H1 (cell line): ENCODE measurements at regions of chr19 and their contacts with region 1.

Region 1: GRCh38 chr19:45506246-45506990 is 861 bp upstream of the VASP start:
- DNase-seq: peak in 1 of 2 experiments; percentile 99
- H3K4me3 ChIP-seq: peak overlapping the region; percentile 72 to 97 (median 95)
- H3K27ac ChIP-seq: peak overlapping the region; percentile 44; the same call in 1 of the 2 replicates
- H3K4me1 ChIP-seq: peaks cover 7 to 14% (median 11%) of the 10 kb centered on the region in 4 experiments
- H3K27me3 ChIP-seq: no peaks in the 10 kb centered on the region
- CTCF ChIP-seq: peak; percentile 51 to 54 (median 53)
- EP300 ChIP-seq: no peak
- POLR2A ChIP-seq: peak; percentile 60 to 80
- RAD21 ChIP-seq: peak; percentile 35 to 51; a peak in 3 of 4 replicates

Region 2: GRCh38 chr19:45391340-45391739 is 115.1 kb before region 1 on chr19:
- CTCF ChIA-PET with region 1: no interaction called
- POLR2A ChIA-PET with region 1: no interaction called
- DNase-seq: no peak
- H3K4me3 ChIP-seq: no peak overlapping the region
- H3K27ac ChIP-seq: peak overlapping the region; percentile 23; the same call in 1 of the 2 replicates
- H3K4me1 ChIP-seq: peaks cover 0 to 5% (median 2%) of the 10 kb centered on the region in 4 experiments; a peak in 4 of 7 replicates
- H3K27me3 ChIP-seq: peaks cover 2 to 11% (median 5%) of the 10 kb centered on the region in 4 experiments; a peak in 6 of 7 replicates
- CTCF ChIP-seq: no peak
- EP300 ChIP-seq: no peak
- POLR2A ChIP-seq: no peak
- RAD21 ChIP-seq: no peak

Region 3: DNA sequence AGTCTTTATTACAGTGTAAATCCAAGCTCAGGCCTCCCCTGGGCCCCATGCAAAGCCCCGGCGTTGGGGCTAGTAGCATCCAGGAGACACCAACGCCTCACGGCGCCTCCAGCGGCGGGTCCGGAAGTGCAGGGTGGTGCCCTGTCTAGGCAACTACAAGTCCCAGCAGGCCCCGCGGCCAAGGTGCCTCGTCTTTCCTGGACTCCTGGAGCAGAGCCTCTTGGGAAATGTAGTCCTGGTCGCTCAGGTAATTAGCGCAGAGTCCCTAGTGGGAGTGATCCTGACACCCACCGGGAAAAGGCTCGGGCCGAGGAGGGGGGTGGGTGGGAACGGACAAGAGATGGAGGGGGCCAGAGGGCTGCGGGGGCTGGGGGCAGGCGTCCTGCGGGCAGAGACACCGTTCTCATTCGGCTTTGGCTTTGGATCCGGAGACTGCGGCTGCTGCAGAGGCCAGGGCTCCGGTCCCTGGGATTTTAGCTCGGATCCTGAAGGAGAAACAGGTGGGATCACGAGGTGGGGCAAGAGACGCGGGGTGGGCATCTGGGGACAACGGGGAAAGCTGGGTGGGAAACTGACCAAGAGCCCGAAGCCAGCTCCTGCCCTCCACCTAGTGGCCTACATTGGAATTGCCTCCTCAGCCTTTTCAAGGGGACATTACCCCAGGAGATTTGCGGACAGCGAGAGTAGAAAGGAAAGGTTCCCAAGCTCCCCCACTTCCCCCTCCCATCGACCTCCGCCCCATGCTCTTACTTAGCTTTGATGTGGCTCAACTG is 20.9 kb before region 1 on chr19:
- CTCF ChIA-PET with region 1: interaction called, 12 read pairs
- POLR2A ChIA-PET with region 1: interaction called, 6 read pairs
- DNase-seq: peak in 1 of 2 experiments; percentile 100
- H3K4me3 ChIP-seq: peak overlapping the region; percentile 32 to 69 (median 52)
- H3K27ac ChIP-seq: no peak overlapping the region; the same call in 1 of the 2 replicates
- H3K4me1 ChIP-seq: peaks cover 0 to 3% (median 0%) of the 10 kb centered on the region in 4 experiments; a peak in 1 of 7 replicates
- H3K27me3 ChIP-seq: no peaks in the 10 kb centered on the region
- CTCF ChIP-seq: peak; percentile 86 to 95 (median 92)
- EP300 ChIP-seq: no peak
- POLR2A ChIP-seq: no peak
- RAD21 ChIP-seq: peak; percentile 59 to 66